ENCODE measurements at regions of chr11 and their contacts with region 1.

Region 1: GRCh38 chr11:118791111-118791965 is at the start of gene DDX6:
- DNase-seq: peak; percentile 83
- ATAC-seq: peak; percentile 60
- H3K4me3 Mint-ChIP-seq: peak within 1 kb of the TSS; percentile 100
- H3K27ac Mint-ChIP-seq: peak within 1 kb of the TSS; percentile 99
- H3K4me1 Mint-ChIP-seq: peaks cover 47% of the 10 kb centered on the region
- H3K27me3 Mint-ChIP-seq: no peaks in the 10 kb centered on the region
- CTCF ChIP-seq: no peak
- total RNA-seq, gene DDX6: 263 and 297 TPM in 2 replicates

Region 2: GRCh38 chr11:118435893-118436624 is 355.3 kb before region 1 on chr11 and contains the start of gene KMT2A:
- CTCF ChIA-PET with region 1: no interaction called
- POLR2A ChIA-PET with region 1: no interaction called
- intact Hi-C with region 1: loop called (anchors 5 kb)
- DNase-seq: peak; percentile 99
- ATAC-seq: peak; percentile 65
- H3K4me3 Mint-ChIP-seq: peak within 1 kb of the TSS; percentile 94
- H3K27ac Mint-ChIP-seq: peak within 1 kb of the TSS; percentile 94
- H3K4me1 Mint-ChIP-seq: peaks cover 37% of the 10 kb centered on the region
- H3K27me3 Mint-ChIP-seq: no peaks in the 10 kb centered on the region
- CTCF ChIP-seq: no peak
- total RNA-seq, gene KMT2A: 104 and 117 TPM in 2 replicates

Region 3: DNA sequence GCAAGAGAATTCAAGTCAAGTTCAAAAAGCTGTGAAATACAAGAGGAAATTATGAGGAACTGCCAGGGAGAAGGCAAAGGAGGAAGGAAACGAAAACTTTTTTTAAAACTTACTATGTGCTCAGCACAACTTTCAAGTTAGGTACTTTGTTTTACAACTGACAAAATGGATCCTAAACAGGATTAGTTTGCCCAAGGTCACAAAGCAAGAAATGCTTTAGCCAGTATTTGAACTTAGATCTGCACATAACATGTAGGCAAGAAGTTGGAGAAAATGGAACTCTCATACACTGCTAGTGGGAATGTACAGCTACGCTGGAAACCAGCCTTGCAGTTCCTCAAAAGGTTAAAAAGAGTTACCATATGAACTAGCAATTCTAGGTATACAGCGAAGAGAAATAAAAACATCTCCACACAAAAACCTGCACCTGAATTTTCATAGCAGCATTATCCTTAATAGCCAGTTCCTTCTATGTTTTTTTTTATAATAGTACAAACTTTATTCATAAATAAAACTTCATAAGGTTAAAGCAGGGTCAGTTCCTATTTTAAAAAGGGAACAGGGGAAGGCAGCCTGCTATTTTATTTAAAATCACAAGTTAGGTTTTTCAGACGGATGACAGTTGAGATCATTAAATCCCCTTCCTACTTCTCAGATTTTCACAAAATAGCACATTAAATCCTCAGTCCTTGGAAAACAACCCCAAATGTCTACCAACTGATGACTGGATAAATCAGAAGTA is 19.6 kb before region 1 on chr11:
- CTCF ChIA-PET with region 1: no interaction called
- POLR2A ChIA-PET with region 1: interaction called, 10 read pairs
- intact Hi-C with region 1: no loop called
- DNase-seq: no peak
- ATAC-seq: no peak
- H3K4me3 Mint-ChIP-seq: peak overlapping the region; percentile 69
- H3K27ac Mint-ChIP-seq: peak overlapping the region; percentile 54
- H3K4me1 Mint-ChIP-seq: peaks cover 79% of the 10 kb centered on the region
- H3K27me3 Mint-ChIP-seq: no peaks in the 10 kb centered on the region
- CTCF ChIP-seq: no peak

Region 4: GRCh38 chr11:118845369-118845768 is 54.0 kb after region 1 on chr11:
- CTCF ChIA-PET with region 1: no interaction called
- POLR2A ChIA-PET with region 1: interaction called, 22 read pairs
- intact Hi-C with region 1: no loop called
- DNase-seq: no peak
- ATAC-seq: no peak
- H3K4me3 Mint-ChIP-seq: no peak overlapping the region
- H3K27ac Mint-ChIP-seq: peak overlapping the region; percentile 46
- H3K4me1 Mint-ChIP-seq: peaks cover 58% of the 10 kb centered on the region
- H3K27me3 Mint-ChIP-seq: no peaks in the 10 kb centered on the region
- CTCF ChIP-seq: no peak

Region 5: GRCh38 chr11:118870396-118871345 is 79.3 kb after region 1 on chr11:
- CTCF ChIA-PET with region 1: interaction called, 26 read pairs
- POLR2A ChIA-PET with region 1: interaction called, 266 read pairs
- intact Hi-C with region 1: loop called (anchors 1 kb)
- DNase-seq: peak; percentile 54
- ATAC-seq: peak; percentile 56
- H3K4me3 Mint-ChIP-seq: peak overlapping the region; percentile 83
- H3K27ac Mint-ChIP-seq: peak overlapping the region; percentile 99
- H3K4me1 Mint-ChIP-seq: peaks cover 68% of the 10 kb centered on the region
- H3K27me3 Mint-ChIP-seq: no peaks in the 10 kb centered on the region
- CTCF ChIP-seq: no peak

Region 6: GRCh38 chr11:118895142-118896039 is 104.1 kb after region 1 on chr11:
- CTCF ChIA-PET with region 1: no interaction called
- POLR2A ChIA-PET with region 1: interaction called, 213 read pairs
- intact Hi-C with region 1: loop called (anchors 1 kb)
- DNase-seq: peak; percentile 62
- ATAC-seq: peak; percentile 70
- H3K4me3 Mint-ChIP-seq: peak overlapping the region; percentile 80
- H3K27ac Mint-ChIP-seq: peak overlapping the region; percentile 98
- H3K4me1 Mint-ChIP-seq: peaks cover 85% of the 10 kb centered on the region
- H3K27me3 Mint-ChIP-seq: no peaks in the 10 kb centered on the region
- CTCF ChIP-seq: no peak

Region 7: DNA sequence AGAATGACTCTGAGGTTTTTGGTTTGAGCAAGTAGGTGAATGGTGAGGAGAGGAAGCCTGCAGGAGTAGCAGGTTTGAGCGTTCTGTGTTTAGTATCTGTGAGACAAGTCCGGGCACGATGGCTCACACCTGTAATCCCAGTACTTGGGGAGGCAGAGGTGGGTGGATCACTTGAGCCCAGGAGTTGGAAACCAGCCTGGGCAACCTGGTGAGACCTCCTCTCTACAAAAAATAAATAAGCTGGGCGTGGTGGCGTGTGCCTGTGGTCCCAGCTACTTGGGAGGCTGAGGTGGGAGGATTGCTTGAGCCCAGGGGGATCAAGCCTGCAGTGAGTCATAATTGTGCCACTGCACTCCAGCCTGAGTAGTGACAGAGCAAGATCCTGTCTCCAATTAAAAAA is 196.9 kb after region 1 on chr11:
- CTCF ChIA-PET with region 1: no interaction called
- POLR2A ChIA-PET with region 1: interaction called, 12 read pairs
- intact Hi-C with region 1: no loop called
- DNase-seq: no peak
- ATAC-seq: no peak
- H3K4me3 Mint-ChIP-seq: no peak overlapping the region
- H3K27ac Mint-ChIP-seq: no peak overlapping the region
- H3K4me1 Mint-ChIP-seq: no peaks in the 10 kb centered on the region
- H3K27me3 Mint-ChIP-seq: no peaks in the 10 kb centered on the region
- CTCF ChIP-seq: no peak